PC-3 (cell line): ENCODE measurements at regions of chr1 and their contacts with region 1.

Region 1: GRCh38 chr1:154982897-154983648 is at the start of gene FLAD1:
- DNase-seq: peak; percentile 100
- ATAC-seq: peak; percentile 100
- H3K4me3 ChIP-seq: peak within 1 kb of the TSS; percentile 86
- H3K27ac ChIP-seq: peak within 1 kb of the TSS; percentile 50
- H3K4me1 ChIP-seq: peaks cover 7% of the 10 kb centered on the region
- H3K27me3 ChIP-seq: no peaks in the 10 kb centered on the region
- CTCF ChIP-seq: no peak
- total RNA-seq, gene FLAD1: 58.5 and 84.0 TPM in 2 replicates

Region 2: GRCh38 chr1:155562581-155563376 is 579.7 kb after region 1 on chr1 and contains the start of gene ASH1L:
- CTCF ChIA-PET with region 1: no interaction called
- POLR2A ChIA-PET with region 1: no interaction called
- intact Hi-C with region 1: loop called (anchors 10 kb)
- DNase-seq: peak; percentile 93
- ATAC-seq: peak; percentile 81
- H3K4me3 ChIP-seq: peak within 1 kb of the TSS; percentile 80
- H3K27ac ChIP-seq: peak within 1 kb of the TSS; percentile 88
- H3K4me1 ChIP-seq: peaks cover 21% of the 10 kb centered on the region
- H3K27me3 ChIP-seq: no peaks in the 10 kb centered on the region
- CTCF ChIP-seq: no peak
- total RNA-seq, gene ASH1L: 27.6 and 38.9 TPM in 2 replicates